Natural killer cell (primary cell): ENCODE measurements at regions of chr19 and their contacts with region 1.

Region 1: DNA sequence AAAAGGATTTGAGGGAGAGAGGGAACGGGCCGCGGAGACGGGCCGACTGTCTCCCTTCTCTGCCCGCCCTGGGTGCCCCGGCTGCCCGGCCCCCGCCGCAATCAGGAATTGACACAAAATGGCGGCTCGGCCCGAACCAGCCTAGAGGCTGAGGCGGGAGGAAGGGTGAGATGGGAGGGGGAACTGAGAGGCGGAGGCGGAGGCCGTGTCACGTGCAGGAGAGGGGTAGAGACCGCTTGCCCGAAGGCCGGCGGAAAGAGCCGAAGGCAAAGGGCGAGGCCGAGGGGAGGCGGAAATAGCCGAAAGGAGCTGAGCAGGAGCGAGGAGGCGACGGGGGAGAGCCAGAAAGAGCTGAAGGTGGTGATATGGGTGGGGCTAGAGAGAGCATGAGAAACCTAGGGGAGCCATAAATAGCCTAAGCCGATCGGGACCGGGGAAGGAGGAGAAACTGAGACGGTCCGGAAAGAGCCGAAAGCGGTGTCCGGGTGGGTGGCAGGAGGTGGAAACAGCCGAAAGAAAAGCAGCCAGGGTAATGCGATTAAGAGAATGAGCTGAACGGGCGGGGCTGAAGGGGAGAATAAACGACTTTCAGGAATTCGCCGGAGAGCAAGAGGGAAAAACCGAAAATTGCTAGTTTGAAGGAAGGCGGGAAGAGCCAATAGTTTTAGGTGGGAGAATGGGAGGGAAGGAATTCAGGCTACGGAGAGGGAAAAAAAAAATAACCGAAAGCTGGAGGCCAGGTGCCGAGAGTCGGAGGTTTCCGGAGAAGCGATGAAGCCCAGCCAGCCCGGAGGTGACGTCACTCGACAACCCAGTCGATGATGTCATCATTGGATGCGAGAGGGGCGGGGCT is at the start of gene ZC3H4:
- DNase-seq: peak; percentile 99
- ATAC-seq: peak; percentile 79 to 94 (median 83)
- H3K4me3 ChIP-seq: peak within 1 kb of the TSS; percentile 83
- H3K4me3 Mint-ChIP-seq: peak within 1 kb of the TSS; percentile 99
- H3K27ac ChIP-seq: peak within 1 kb of the TSS; percentile 98
- H3K27ac Mint-ChIP-seq: peak within 1 kb of the TSS; percentile 99 to 100
- H3K4me1 ChIP-seq: peaks cover 13% of the 10 kb centered on the region
- H3K4me1 Mint-ChIP-seq: peaks cover 46 to 49% of the 10 kb centered on the region in 2 donors
- H3K27me3 ChIP-seq: no peaks in the 10 kb centered on the region
- H3K27me3 Mint-ChIP-seq: peaks cover 0 to 4% of the 10 kb centered on the region in 2 donors
- CTCF ChIP-seq: no peak
- total RNA-seq, gene ZC3H4: 71.2 to 75.3 (median 73.3) TPM

Region 2: DNA sequence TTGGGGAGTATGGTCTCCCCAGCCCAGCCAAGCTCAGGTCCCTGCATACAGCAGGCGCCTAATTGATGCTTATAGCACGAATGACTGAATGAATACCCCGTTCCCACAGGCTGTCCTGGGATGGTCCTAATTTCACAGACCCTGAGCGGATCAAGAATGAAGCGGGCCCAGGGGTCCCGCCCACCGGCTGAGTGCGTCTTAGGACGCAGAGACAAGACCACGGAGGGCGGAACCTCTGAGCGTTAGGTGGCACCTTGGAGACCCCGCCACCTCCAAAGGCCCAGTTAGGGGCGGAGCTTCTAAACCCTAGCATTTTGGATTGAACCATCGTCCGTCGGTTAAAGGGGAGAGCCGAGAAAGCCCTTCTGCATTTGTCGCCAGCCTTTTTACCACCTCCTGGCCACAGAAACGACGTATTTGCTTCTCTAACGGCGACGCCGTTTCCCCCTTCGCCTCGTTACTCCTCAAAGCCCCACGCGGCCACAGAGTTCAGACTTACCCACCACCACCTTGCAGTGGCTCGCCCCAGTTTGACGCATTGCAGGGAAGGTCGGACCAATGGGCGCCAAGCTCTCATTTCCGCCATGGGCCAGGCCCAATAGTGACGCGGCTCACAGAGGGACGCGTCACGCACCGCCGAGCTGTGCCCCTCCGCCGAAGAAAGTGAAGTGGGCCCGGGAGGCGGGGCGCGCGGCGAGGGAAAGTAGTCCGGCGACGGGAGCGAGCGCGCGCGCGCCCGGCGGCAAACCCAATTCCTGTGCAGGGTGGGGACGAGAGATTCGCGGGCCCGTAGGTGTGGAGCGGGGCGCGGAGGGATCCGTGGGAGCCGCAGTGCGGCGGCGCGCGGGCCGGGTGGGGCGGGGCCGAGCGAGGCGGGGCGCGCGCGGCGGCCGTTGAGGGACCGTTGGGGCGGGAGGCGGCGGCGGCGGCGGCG is 512.6 kb before region 1 on chr19:
- intact Hi-C with region 1: loop called (anchors 5 kb)
- DNase-seq: peak; percentile 99
- ATAC-seq: peak; percentile 87 to 94 (median 88)
- H3K4me3 ChIP-seq: peak overlapping the region; percentile 100
- H3K4me3 Mint-ChIP-seq: peak overlapping the region; percentile 98
- H3K27ac ChIP-seq: peak overlapping the region; percentile 100
- H3K27ac Mint-ChIP-seq: peak overlapping the region; percentile 99 to 100
- H3K4me1 ChIP-seq: peaks cover 38% of the 10 kb centered on the region
- H3K4me1 Mint-ChIP-seq: peaks cover 19 to 39% of the 10 kb centered on the region in 2 donors
- H3K27me3 ChIP-seq: no peaks in the 10 kb centered on the region
- H3K27me3 Mint-ChIP-seq: no peaks in the 10 kb centered on the region
- CTCF ChIP-seq: no peak

Region 3: DNA sequence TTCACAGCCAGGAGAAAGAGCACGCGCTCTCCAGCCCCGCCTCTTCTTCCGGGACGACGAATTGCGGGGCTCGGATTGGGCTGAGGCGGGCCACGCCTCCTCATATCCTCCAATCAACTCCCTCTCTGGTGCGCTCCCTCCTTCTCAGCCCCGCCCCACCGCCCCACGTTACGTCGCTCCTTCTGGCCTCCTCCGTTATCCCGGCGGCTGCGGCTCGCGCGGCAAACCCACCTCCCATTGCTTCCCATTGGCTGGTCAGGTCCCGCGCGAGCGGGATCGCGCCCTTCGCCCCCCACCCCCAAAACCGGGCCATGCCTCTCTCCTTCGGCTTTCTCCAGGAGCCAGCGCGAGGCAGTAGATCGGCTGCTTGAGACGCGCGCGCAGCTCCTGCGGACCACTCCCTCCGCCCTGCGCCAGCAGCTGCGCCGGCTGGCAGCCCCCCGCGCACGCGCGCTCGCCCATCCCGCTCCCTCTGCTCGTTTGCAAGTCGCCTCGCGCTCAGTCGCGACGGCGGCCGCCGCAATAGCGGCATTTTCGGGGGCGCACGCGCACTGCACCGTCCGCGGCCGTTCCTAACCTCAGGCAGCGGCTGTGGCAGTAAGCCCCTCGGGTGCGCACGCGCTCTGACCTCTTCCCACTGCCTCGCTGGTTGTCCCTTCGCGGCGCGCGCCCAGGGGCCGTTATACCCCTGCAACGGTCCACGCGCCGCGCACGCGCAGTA is 252.9 kb before region 1 on chr19:
- intact Hi-C with region 1: loop called (anchors 1 kb)
- DNase-seq: peak; percentile 92 to 98
- ATAC-seq: peak; percentile 82 to 94 (median 82)
- H3K4me3 ChIP-seq: peak overlapping the region; percentile 83
- H3K4me3 Mint-ChIP-seq: peak overlapping the region; percentile 89
- H3K27ac ChIP-seq: peak overlapping the region; percentile 84
- H3K27ac Mint-ChIP-seq: peak overlapping the region; percentile 91 to 94
- H3K4me1 ChIP-seq: peaks cover 47% of the 10 kb centered on the region
- H3K4me1 Mint-ChIP-seq: peaks cover 12 to 19% of the 10 kb centered on the region in 2 donors
- H3K27me3 ChIP-seq: no peaks in the 10 kb centered on the region
- H3K27me3 Mint-ChIP-seq: no peaks in the 10 kb centered on the region
- CTCF ChIP-seq: no peak

Region 4: GRCh38 chr19:47075179-47075810 is 37.9 kb before region 1 on chr19:
- intact Hi-C with region 1: loop called (anchors 5 kb)
- DNase-seq: no peak
- ATAC-seq: peak in 1 of 3 donors; percentile 57
- H3K4me3 ChIP-seq: no peak overlapping the region
- H3K4me3 Mint-ChIP-seq: no peak overlapping the region
- H3K27ac ChIP-seq: no peak overlapping the region
- H3K27ac Mint-ChIP-seq: peak overlapping the region in 1 of 2 donors; percentile 61
- H3K4me1 ChIP-seq: peaks cover 10% of the 10 kb centered on the region
- H3K4me1 Mint-ChIP-seq: peaks cover 12 to 16% of the 10 kb centered on the region in 2 donors
- H3K27me3 ChIP-seq: no peaks in the 10 kb centered on the region
- H3K27me3 Mint-ChIP-seq: no peaks in the 10 kb centered on the region
- CTCF ChIP-seq: no peak

Region 5: GRCh38 chr19:47130591-47131227 is 17.5 kb after region 1 on chr19 and contains the start of gene SAE1:
- intact Hi-C with region 1: loop called (anchors 2 kb)
- DNase-seq: peak; percentile 87 to 95
- ATAC-seq: peak; percentile 89 to 94 (median 91)
- H3K4me3 ChIP-seq: peak within 1 kb of the TSS; percentile 93
- H3K4me3 Mint-ChIP-seq: peak within 1 kb of the TSS; percentile 98
- H3K27ac ChIP-seq: peak within 1 kb of the TSS; percentile 74
- H3K27ac Mint-ChIP-seq: peak within 1 kb of the TSS; percentile 92 to 99
- H3K4me1 ChIP-seq: peaks cover 17% of the 10 kb centered on the region
- H3K4me1 Mint-ChIP-seq: peaks cover 35 to 51% of the 10 kb centered on the region in 2 donors
- H3K27me3 ChIP-seq: no peaks in the 10 kb centered on the region
- H3K27me3 Mint-ChIP-seq: no peaks in the 10 kb centered on the region
- CTCF ChIP-seq: peak; percentile 46
- total RNA-seq, gene SAE1: 42.5 to 49.3 (median 46.0) TPM

Region 6: DNA sequence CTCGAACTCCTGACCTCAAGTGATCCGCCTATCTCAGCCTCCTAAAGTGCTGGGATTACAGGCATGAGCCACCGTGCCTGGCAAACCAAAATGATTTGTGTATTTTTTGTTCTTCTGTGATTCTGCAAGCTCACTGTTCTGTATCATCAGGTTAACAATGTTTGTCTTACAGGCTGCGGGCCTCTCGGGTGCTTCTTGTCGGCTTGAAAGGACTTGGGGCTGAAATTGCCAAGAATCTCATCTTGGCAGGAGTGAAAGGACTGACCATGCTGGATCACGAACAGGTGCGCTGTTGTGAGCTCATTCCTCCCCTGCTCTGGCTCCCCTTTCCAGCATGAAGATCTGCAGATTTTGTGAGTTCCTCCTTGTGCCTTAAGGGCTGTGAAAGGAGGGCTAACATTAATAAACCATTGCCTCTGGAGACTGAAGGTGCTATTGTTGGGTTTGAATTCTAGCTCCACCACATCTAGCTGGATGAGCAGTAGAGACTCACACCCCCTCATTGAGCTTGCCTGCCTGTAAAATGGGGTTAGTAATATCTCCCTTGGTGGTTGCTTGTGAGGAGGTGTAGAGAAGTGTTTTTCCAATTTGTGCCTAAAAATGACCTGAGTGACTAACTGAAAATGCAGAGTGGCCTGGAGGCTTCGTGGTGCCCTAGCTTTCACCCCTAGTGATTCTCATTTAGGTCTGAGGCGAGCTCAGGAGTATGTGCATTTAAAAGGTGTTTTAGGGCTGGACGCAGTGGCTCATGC is 30.3 kb after region 1 on chr19:
- intact Hi-C with region 1: no loop called
- DNase-seq: no peak
- ATAC-seq: no peak
- H3K4me3 ChIP-seq: no peak overlapping the region
- H3K4me3 Mint-ChIP-seq: no peak overlapping the region
- H3K27ac ChIP-seq: no peak overlapping the region
- H3K27ac Mint-ChIP-seq: no peak overlapping the region
- H3K4me1 ChIP-seq: no peaks in the 10 kb centered on the region
- H3K4me1 Mint-ChIP-seq: peaks cover 18 to 20% of the 10 kb centered on the region in 2 donors
- H3K27me3 ChIP-seq: no peaks in the 10 kb centered on the region
- H3K27me3 Mint-ChIP-seq: no peaks in the 10 kb centered on the region
- CTCF ChIP-seq: no peak

Region 7: DNA sequence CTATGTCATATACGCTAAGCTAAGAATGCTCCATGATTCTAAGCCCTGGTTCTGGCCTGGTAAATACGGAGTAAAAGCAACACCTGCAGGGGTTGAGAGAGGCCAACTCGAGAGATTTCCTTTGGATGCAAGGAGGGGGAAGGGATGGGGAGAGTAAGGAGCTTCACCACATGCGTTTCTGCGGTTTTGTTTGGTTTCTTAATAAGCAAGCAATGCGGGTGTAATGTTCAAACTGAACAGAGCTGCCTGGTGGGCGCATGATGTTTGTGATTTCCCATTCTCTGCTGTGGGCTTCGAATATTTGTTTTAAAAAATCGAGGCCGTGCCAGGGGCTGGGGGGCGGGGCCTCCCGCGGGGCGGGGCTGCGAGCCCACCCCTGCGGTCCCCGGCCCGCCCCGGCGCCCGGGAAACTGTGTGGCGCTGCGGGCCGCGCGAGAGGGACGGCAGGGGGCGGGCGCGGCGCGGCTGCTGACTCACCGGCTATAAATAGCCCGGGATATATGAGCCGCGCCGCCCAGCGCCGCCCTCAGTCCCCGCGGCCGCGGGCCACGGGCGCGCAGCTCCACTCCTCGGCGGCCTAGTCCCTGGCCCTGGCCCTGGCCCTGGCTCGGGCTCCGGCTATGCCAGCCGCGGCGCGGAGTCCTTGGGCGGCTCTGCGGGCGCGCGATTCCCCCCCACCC is 112.7 kb after region 1 on chr19:
- intact Hi-C with region 1: loop called (anchors 5 kb)
- DNase-seq: peak; percentile 94 to 95
- ATAC-seq: peak; percentile 43 to 76 (median 66)
- H3K4me3 ChIP-seq: peak overlapping the region; percentile 47
- H3K4me3 Mint-ChIP-seq: peak overlapping the region; percentile 79
- H3K27ac ChIP-seq: peak overlapping the region; percentile 96
- H3K27ac Mint-ChIP-seq: no peak overlapping the region
- H3K4me1 ChIP-seq: peaks cover 45% of the 10 kb centered on the region
- H3K4me1 Mint-ChIP-seq: peaks cover 6 to 18% of the 10 kb centered on the region in 2 donors
- H3K27me3 ChIP-seq: no peaks in the 10 kb centered on the region
- H3K27me3 Mint-ChIP-seq: no peaks in the 10 kb centered on the region
- CTCF ChIP-seq: peak; percentile 26

Region 8: GRCh38 chr19:47697863-47698609 is 584.8 kb after region 1 on chr19:
- intact Hi-C with region 1: no loop called
- DNase-seq: peak; percentile 43 to 76
- ATAC-seq: peak; percentile 63 to 86 (median 78)
- H3K4me3 ChIP-seq: no peak overlapping the region
- H3K4me3 Mint-ChIP-seq: no peak overlapping the region
- H3K27ac ChIP-seq: no peak overlapping the region
- H3K27ac Mint-ChIP-seq: no peak overlapping the region
- H3K4me1 ChIP-seq: no peaks in the 10 kb centered on the region
- H3K4me1 Mint-ChIP-seq: peaks cover 0 to 6% of the 10 kb centered on the region in 2 donors
- H3K27me3 ChIP-seq: no peaks in the 10 kb centered on the region
- H3K27me3 Mint-ChIP-seq: no peaks in the 10 kb centered on the region
- CTCF ChIP-seq: peak; percentile 74